ENCODE measurements at regions of chr4 and their contacts with region 1.

Region 1: DNA sequence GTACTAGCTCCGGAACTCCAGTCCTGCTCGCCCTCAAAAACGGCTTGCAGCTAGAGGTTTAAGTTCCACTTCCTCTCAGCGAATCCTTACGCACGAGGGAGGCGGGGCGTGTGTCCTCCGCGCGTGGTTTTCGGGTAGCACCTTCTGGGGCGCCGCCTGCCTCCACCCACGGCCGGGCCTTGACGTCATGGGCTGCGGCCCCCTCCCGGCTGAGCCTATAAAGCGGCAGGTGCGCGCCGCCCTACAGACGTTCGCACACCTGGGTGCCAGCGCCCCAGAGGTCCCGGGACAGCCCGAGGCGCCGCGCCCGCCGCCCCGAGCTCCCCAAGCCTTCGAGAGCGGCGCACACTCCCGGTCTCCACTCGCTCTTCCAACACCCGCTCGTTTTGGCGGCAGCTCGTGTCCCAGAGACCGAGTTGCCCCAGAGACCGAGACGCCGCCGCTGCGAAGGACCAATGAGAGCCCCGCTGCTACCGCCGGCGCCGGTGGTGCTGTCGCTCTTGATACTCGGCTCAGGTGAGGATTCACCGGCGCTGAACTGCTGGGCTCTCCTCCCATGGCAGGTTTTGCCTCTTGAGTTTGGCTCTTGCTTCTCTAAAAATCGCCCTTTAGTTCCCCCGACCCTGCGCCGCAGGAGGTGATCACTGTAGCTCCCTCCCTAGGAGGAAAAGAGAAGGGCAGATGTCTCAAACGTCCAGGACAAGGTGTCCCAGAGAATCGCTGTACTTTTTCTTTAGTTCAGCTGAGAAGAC is at the start of gene AREG:
- DNase-seq: peak; percentile 78 to 97 (median 89)
- ATAC-seq: peak; percentile 95
- H3K4me3 ChIP-seq: peak within 1 kb of the TSS; percentile 77 to 79
- H3K4me3 Mint-ChIP-seq: peak within 1 kb of the TSS; percentile 96
- H3K27ac ChIP-seq: peak within 1 kb of the TSS; percentile 87 to 90
- H3K27ac Mint-ChIP-seq: peak within 1 kb of the TSS; percentile 96
- H3K4me1 ChIP-seq: peaks cover 5% of the 10 kb centered on the region
- H3K4me1 Mint-ChIP-seq: peaks cover 13% of the 10 kb centered on the region
- H3K27me3 ChIP-seq: no peaks in the 10 kb centered on the region
- H3K27me3 Mint-ChIP-seq: peaks cover 13% of the 10 kb centered on the region
- CTCF ChIP-seq: peak; percentile 64
- total RNA-seq, gene AREG: 52.8 to 53.2 TPM

Region 2: GRCh38 chr4:74157561-74158465 is 287.3 kb before region 1 on chr4 and contains the start of gene MTHFD2L:
- CTCF ChIA-PET with region 1: no interaction called
- POLR2A ChIA-PET with region 1: no interaction called
- intact Hi-C with region 1: loop called in 1 of 2 experiments (anchors 5 kb)
- DNase-seq: peak; percentile 44 to 88 (median 76)
- ATAC-seq: peak; percentile 96
- H3K4me3 ChIP-seq: peak within 1 kb of the TSS; percentile 58 to 77
- H3K4me3 Mint-ChIP-seq: peak within 1 kb of the TSS; percentile 93
- H3K27ac ChIP-seq: peak within 1 kb of the TSS; percentile 62 to 70
- H3K27ac Mint-ChIP-seq: peak within 1 kb of the TSS; percentile 92
- H3K4me1 ChIP-seq: peaks cover 19% of the 10 kb centered on the region
- H3K4me1 Mint-ChIP-seq: peaks cover 27% of the 10 kb centered on the region
- H3K27me3 ChIP-seq: no peaks in the 10 kb centered on the region
- H3K27me3 Mint-ChIP-seq: no peaks in the 10 kb centered on the region
- CTCF ChIP-seq: no peak
- total RNA-seq, gene MTHFD2L: 10.7 to 11.3 TPM

Region 3: GRCh38 chr4:74376888-74377483 is 68.1 kb before region 1 on chr4:
- CTCF ChIA-PET with region 1: interaction called, 4 read pairs
- POLR2A ChIA-PET with region 1: no interaction called
- intact Hi-C with region 1: loop called (anchors 1 to 2 kb)
- DNase-seq: peak in 2 of 9 experiments; percentile 56 to 70
- ATAC-seq: peak; percentile 62
- H3K4me3 ChIP-seq: no peak overlapping the region
- H3K4me3 Mint-ChIP-seq: no peak overlapping the region
- H3K27ac ChIP-seq: no peak overlapping the region
- H3K27ac Mint-ChIP-seq: no peak overlapping the region
- H3K4me1 ChIP-seq: no peaks in the 10 kb centered on the region
- H3K4me1 Mint-ChIP-seq: no peaks in the 10 kb centered on the region
- H3K27me3 ChIP-seq: no peaks in the 10 kb centered on the region
- H3K27me3 Mint-ChIP-seq: peaks cover 12% of the 10 kb centered on the region
- CTCF ChIP-seq: peak; percentile 71

Region 4: GRCh38 chr4:74397748-74398426 is 47.2 kb before region 1 on chr4:
- CTCF ChIA-PET with region 1: interaction called, 3 read pairs
- POLR2A ChIA-PET with region 1: interaction called, 9 read pairs
- intact Hi-C with region 1: loop called (anchors 1 to 2 kb)
- DNase-seq: peak in 2 of 9 experiments; percentile 36 to 67
- ATAC-seq: peak; percentile 77
- H3K4me3 ChIP-seq: peak overlapping the region; percentile 66 to 93
- H3K4me3 Mint-ChIP-seq: peak overlapping the region; percentile 91
- H3K27ac ChIP-seq: peak overlapping the region; percentile 82 to 83
- H3K27ac Mint-ChIP-seq: peak overlapping the region; percentile 95
- H3K4me1 ChIP-seq: no peaks in the 10 kb centered on the region
- H3K4me1 Mint-ChIP-seq: peaks cover 5% of the 10 kb centered on the region
- H3K27me3 ChIP-seq: no peaks in the 10 kb centered on the region
- H3K27me3 Mint-ChIP-seq: no peaks in the 10 kb centered on the region
- CTCF ChIP-seq: no peak